ENCODE measurements at regions of chr16 and their contacts with region 1.

Region 1: DNA sequence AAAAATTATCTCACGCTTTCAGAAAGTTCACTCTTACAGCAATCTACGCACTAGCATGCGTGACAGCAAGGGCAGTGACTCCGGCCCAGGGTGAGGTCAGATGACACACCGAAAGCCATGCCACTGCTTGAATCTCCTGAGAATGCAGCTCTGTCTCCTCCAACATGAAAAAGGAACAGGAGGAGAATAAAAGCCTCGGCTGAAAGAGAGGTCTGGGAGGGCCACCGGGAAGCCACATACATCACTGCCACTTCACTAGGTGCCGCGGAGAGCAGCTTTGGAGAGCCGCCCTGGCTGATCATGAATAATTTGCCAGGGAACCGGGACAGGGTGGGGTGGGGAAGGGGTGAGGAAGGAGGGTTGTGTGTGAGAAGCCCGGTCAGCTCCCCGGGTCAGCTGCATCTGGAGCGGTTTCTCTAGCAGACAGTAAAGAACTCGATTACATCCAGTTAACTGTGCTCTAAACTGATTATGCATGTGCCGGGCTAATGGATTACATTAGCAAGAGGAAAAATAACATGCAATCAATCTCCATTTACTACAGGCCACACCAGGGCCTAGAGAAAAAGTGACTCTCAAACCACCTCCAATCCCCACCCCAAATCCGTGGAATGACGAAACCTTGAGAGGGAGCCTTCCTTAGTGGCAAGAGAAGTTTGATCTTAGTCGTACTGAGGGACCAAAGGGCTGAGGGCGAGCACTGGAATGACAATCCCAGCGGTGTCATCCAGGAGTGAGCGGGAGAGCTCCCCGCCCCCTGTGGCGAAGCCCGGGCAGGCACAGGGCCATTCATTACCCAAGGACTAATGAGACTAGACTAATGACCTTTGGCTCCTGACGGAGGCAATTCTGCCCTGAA is 100.3 kb downstream of the ZFHX3 start:
- DNase-seq: no peak
- ATAC-seq: peak; percentile 48

Region 2: GRCh38 chr16:73058221-73058615 is 110.6 kb after region 1 on chr16:
- intact Hi-C with region 1: loop called (anchors 10 kb)
- DNase-seq: peak; percentile 66
- ATAC-seq: peak; percentile 40